Endothelial cell of umbilical vein (primary cell): ENCODE measurements at regions of chr7 and their contacts with region 1.

Region 1: DNA sequence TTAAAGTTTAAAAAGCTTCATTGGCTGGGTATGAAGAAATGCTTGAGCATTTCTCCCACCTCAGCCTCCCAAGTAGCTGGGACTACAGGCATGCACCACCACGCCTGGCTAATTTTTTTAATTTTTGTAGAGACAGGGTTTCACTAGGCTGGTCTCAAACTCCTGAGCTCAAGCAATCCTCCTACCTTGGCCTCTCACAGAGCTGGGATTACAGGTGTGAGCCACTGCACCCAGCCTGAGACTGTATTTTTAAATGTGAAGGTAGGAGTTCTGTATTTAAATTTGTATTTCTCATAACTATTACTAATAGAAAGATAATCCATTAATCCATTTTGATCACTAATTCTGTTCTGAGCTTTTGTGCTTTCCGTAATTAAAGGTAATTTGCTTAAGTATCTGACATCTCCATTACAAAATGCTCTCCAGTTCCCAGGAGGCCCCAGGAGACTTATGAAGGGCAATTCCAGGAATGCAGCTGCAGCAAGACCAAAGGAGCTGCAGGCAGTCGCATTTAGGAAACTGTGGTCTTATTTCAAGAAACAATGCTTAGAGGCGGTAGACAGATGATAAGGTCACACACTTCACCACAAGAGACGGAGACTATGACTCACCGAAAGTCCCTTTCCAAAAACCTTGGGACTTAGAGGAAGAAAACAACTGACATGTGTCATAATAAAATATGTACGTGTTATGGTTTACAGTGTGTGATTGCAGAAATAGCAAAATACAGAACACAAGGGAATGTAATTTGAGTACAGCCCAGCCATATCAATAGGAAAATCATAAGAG is 23.3 kb downstream of the YAE1 start:
- DNase-seq: peak; percentile 99
- H3K4me3 ChIP-seq: no peak overlapping the region
- H3K27ac ChIP-seq: peak overlapping the region; percentile 98
- H3K4me1 ChIP-seq: peaks cover 70% of the 10 kb centered on the region
- H3K27me3 ChIP-seq: no peaks in the 10 kb centered on the region
- CTCF ChIP-seq: no peak
- POLR2A ChIP-seq: peak; percentile 38

Region 2: DNA sequence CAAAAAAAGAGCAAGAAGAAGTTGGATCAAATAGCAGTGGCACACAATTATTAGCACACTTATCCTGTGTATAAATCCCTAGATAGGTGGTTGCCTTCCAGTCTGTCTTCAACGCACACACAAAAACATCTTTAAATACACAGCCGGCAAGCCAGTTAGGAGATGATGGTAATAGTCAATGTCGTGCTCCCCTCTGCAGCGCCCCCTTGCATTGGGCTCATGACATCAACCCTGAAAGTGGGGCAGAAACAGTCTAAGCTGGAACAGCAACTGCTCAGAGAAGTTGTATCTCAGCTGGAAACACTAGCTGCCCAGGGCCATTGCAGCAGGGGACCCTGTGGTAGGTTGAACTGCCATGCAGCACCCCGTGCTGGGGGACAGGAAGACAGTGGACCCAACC is 202.8 kb before region 1 on chr7:
- CTCF ChIA-PET with region 1: no interaction called
- POLR2A ChIA-PET with region 1: no interaction called
- dilution Hi-C with region 1: no loop called
- intact Hi-C with region 1: no loop called
- DNase-seq: no peak
- H3K4me3 ChIP-seq: no peak overlapping the region
- H3K27ac ChIP-seq: no peak overlapping the region
- H3K4me1 ChIP-seq: no peaks in the 10 kb centered on the region
- H3K27me3 ChIP-seq: no peaks in the 10 kb centered on the region
- CTCF ChIP-seq: no peak
- POLR2A ChIP-seq: no peak

Region 3: DNA sequence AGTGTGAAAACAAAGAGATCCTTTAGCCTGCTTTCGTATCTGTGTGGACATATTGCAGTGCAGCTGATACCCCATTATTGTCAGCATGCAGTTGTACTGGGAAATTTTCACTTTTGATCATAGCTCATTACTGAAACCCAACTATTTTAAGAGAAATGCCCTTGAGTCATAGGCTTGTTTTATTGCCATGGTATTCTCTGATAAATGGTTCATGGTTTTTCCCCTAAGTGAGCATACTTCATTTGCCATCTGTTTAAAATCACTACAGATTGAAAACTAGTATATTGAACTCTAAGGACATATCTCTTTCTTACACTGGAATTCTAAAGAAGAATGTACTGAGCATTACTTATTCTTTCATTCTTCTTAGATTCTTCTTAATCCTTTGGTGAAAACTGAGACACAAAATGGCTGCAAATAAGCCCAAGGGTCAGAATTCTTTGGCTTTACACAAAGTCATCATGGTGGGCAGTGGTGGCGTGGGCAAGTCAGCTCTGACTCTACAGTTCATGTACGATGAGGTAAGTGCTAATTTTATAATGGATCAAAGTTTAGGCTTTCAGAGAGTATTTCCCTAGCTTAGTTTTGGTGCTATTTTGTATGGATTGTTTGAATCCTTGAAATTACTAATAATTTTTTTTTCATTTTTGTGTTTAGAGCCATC is 96.9 kb after region 1 on chr7:
- CTCF ChIA-PET with region 1: no interaction called
- POLR2A ChIA-PET with region 1: no interaction called
- dilution Hi-C with region 1: no loop called
- intact Hi-C with region 1: loop called (anchors 2 kb)
- DNase-seq: no peak
- H3K4me3 ChIP-seq: no peak overlapping the region
- H3K27ac ChIP-seq: no peak overlapping the region
- H3K4me1 ChIP-seq: peaks cover 64% of the 10 kb centered on the region
- H3K27me3 ChIP-seq: no peaks in the 10 kb centered on the region
- CTCF ChIP-seq: no peak
- POLR2A ChIP-seq: no peak

Region 4: GRCh38 chr7:39732837-39733804 is 143.6 kb after region 1 on chr7:
- CTCF ChIA-PET with region 1: interaction called, 3 read pairs
- POLR2A ChIA-PET with region 1: no interaction called
- dilution Hi-C with region 1: no loop called
- intact Hi-C with region 1: loop called (anchors 1 kb)
- DNase-seq: peak; percentile 93
- H3K4me3 ChIP-seq: peak overlapping the region; percentile 31 to 46 (median 42)
- H3K27ac ChIP-seq: peak overlapping the region; percentile 84
- H3K4me1 ChIP-seq: peaks cover 23% of the 10 kb centered on the region
- H3K27me3 ChIP-seq: no peaks in the 10 kb centered on the region
- CTCF ChIP-seq: no peak
- POLR2A ChIP-seq: peak; percentile 34